AG04450 (cell line): ENCODE measurements at regions of chr5 and their contacts with region 1.

Region 1: GRCh38 chr5:14644623-14645237 is 19.8 kb upstream of the OTULIN start:
- DNase-seq: no peak
- H3K4me3 ChIP-seq: no peak overlapping the region
- H3K27ac ChIP-seq: no peak overlapping the region
- H3K27me3 ChIP-seq: peaks cover 5% of the 10 kb centered on the region
- CTCF ChIP-seq: no peak

Region 2: GRCh38 chr5:14351845-14352712 is 292.7 kb before region 1 on chr5:
- CTCF ChIA-PET with region 1: interaction called, 11 read pairs
- POLR2A ChIA-PET with region 1: no interaction called
- DNase-seq: peak; percentile 47
- H3K4me3 ChIP-seq: no peak overlapping the region
- H3K27ac ChIP-seq: peak overlapping the region; percentile 21
- H3K27me3 ChIP-seq: no peaks in the 10 kb centered on the region
- CTCF ChIP-seq: peak; percentile 95

Region 3: DNA sequence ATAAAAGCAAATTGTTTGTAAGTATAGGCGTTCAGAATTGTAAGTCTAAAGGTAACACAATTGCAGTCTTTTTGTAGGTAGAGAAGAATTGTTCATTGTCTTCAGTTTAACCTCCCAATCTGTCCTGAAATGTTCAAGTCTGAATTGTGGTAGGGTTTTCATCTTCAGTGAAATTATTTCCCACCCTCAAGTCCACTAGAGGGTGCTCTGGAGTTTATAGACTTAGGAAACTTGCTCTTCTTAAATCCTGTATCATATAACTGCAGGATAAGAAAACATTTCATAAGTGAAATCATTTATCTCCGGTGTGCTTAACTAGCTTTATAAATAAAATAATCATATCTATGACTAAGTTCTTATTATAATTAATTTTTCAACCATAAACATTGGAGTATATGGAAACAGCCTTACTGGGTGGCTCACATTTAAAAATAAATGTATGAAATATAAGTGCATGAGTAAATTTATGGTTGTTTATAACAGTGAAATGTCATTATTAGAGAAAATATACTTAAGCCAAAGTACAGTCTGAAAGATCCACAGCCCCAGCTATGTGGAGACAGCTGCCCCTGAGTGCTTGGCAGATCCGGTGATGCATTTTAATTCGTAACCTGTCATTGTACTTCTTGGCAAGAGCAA is 245.6 kb before region 1 on chr5:
- CTCF ChIA-PET with region 1: interaction called, 43 read pairs
- POLR2A ChIA-PET with region 1: interaction called, 3 read pairs
- DNase-seq: no peak
- H3K4me3 ChIP-seq: no peak overlapping the region
- H3K27ac ChIP-seq: no peak overlapping the region
- H3K27me3 ChIP-seq: no peaks in the 10 kb centered on the region
- CTCF ChIP-seq: peak; percentile 79

Region 4: GRCh38 chr5:14417276-14417730 is 227.4 kb before region 1 on chr5:
- CTCF ChIA-PET with region 1: interaction called, 12 read pairs
- POLR2A ChIA-PET with region 1: no interaction called
- DNase-seq: no peak
- H3K4me3 ChIP-seq: no peak overlapping the region
- H3K27ac ChIP-seq: peak overlapping the region; percentile 25
- H3K27me3 ChIP-seq: no peaks in the 10 kb centered on the region
- CTCF ChIP-seq: no peak

Region 5: DNA sequence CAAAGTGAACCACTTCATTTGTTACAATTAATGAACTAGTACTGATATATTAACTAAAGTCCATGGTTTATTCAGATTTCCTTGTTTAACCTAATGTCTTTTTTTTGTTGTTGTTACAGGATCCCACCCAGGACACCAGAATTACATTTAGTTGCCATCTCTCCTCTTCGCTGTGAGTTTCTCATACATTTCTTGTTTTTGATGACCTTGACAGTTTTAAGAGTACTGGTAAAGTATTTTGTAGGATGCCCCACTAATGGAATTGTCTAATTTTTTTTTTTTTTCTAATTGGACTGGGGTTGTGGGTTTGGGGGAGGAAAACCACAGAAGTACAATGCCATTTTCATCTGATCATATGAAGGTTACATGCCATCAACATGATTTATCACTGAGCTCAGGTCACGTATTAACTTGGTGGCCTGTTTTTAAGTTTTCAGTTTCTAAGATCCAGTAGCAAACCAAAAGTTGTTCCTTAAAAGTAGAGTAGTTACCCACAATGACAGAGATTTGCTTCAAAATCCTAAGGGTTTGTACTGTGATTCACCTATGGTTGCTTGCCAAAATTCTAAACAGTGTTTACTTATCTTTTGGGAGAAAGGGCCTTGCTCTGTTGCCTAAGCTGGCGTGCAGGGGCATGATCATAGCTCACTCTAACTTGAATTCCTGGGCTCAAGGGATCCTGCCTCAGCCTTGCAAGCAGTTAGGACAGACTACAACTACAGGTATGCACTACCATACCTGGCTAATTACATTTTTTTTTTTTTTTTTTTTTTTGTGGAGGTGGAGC is 15.3 kb after region 1 on chr5:
- CTCF ChIA-PET with region 1: interaction called, 24 read pairs
- POLR2A ChIA-PET with region 1: interaction called, 7 read pairs
- DNase-seq: peak; percentile 56
- H3K4me3 ChIP-seq: no peak overlapping the region
- H3K27ac ChIP-seq: peak overlapping the region; percentile 11
- H3K27me3 ChIP-seq: no peaks in the 10 kb centered on the region
- CTCF ChIP-seq: no peak